ENCODE measurements at regions of chr17 and their contacts with region 1.

Region 1: DNA sequence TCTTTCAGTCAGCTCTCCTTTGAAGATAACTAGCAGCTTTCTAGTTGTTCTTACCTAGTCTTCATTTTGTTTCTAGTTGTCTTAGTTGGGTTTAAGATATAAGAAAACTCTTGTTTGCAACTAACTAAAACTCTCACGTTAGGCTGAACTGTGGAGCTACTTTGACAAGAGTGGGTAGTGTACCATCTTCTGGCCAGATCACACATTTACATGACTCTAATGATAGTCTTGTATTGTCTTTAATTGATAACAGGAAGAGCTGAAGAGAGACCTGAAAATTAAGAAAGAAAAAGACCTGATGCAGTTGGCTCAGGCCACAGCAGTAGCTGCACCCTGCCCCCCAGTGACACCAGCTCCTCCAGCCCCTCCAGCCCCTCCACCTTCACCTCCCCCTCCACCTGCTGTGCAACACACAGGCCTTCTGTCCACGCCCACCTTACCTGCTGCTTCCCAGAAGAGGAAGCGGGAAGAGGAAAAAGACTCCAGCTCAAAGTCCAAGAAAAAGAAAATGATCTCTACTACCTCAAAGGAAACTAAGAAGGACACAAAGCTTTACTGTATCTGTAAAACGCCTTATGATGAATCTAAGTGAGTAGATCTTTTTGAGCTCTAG is 36.9 kb downstream of the C17orf58 start:
- DNase-seq: no peak
- H3K4me3 ChIP-seq: no peak overlapping the region
- H3K27ac ChIP-seq: no peak overlapping the region; the same call in 1 of the 2 replicates
- H3K4me1 ChIP-seq: peaks cover 0 to 4% (median 0%) of the 10 kb centered on the region in 4 experiments; a peak in 1 of 7 replicates
- H3K27me3 ChIP-seq: no peaks in the 10 kb centered on the region
- CTCF ChIP-seq: no peak
- EP300 ChIP-seq: no peak
- POLR2A ChIP-seq: 0 out of 3 replicates have a peak, but pooled peaks of 1 of the 2 experiments have one; percentile 2
- RAD21 ChIP-seq: no peak

Region 2: GRCh38 chr17:67942810-67943209 is 16.6 kb before region 1 on chr17:
- CTCF ChIA-PET with region 1: interaction called, 11 read pairs
- POLR2A ChIA-PET with region 1: interaction called, 5 read pairs
- DNase-seq: no peak
- H3K4me3 ChIP-seq: no peak overlapping the region
- H3K27ac ChIP-seq: no peak overlapping the region
- H3K4me1 ChIP-seq: no peaks in the 10 kb centered on the region
- H3K27me3 ChIP-seq: no peaks in the 10 kb centered on the region
- CTCF ChIP-seq: peak in 2 of 3 experiments; percentile 34 to 67; a peak in 2 of 4 replicates
- EP300 ChIP-seq: no peak
- POLR2A ChIP-seq: no peak
- RAD21 ChIP-seq: peak; percentile 14 to 42; a peak in 2 of 4 replicates

Region 3: DNA sequence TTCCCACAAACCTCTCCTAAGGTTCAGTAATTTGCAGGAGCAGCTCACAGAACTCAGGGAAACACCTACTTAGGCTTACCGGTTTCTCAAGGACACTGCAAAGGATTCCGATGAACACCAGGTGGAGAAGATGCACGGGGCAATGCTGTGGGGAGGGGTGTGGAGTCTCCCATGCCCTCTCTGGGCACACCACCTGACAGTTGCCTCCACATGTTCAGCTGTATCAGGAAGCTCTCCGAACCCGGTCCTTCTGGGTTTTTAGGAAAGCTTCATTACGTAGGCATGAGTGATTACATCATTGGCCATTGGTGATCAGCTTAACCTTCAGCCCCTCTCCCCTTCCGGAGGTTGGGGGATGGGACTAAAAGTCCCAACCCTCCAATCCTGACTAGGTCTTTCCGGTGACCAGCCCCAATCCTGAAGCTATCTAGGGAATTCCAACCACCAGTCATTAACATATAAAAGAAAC is 15.2 kb after region 1 on chr17:
- CTCF ChIA-PET with region 1: interaction called, 12 read pairs
- POLR2A ChIA-PET with region 1: interaction called, 13 read pairs
- DNase-seq: peak; percentile 72 to 87
- H3K4me3 ChIP-seq: peak overlapping the region; percentile 70 to 87 (median 78)
- H3K27ac ChIP-seq: peak overlapping the region; percentile 95
- H3K4me1 ChIP-seq: peaks cover 0 to 7% (median 2%) of the 10 kb centered on the region in 4 experiments; a peak in 4 of 7 replicates
- H3K27me3 ChIP-seq: no peaks in the 10 kb centered on the region
- CTCF ChIP-seq: peak in 1 of 3 experiments; percentile 6; a peak in 1 of 4 replicates
- EP300 ChIP-seq: peak in 1 of 2 experiments; percentile 27; a peak in 1 of 3 replicates
- POLR2A ChIP-seq: peak; percentile 45 to 89
- RAD21 ChIP-seq: no peak

Region 4: GRCh38 chr17:68011199-68011665 is 51.8 kb after region 1 on chr17:
- CTCF ChIA-PET with region 1: interaction called, 10 read pairs
- POLR2A ChIA-PET with region 1: interaction called, 4 read pairs
- DNase-seq: peak in 1 of 2 experiments; percentile 92
- H3K4me3 ChIP-seq: peak overlapping the region in 1 of 4 experiments; percentile 33; a peak in 1 of 8 replicates
- H3K27ac ChIP-seq: no peak overlapping the region
- H3K4me1 ChIP-seq: no peaks in the 10 kb centered on the region
- H3K27me3 ChIP-seq: no peaks in the 10 kb centered on the region
- CTCF ChIP-seq: peak; percentile 67 to 85 (median 83)
- EP300 ChIP-seq: no peak
- POLR2A ChIP-seq: no peak
- RAD21 ChIP-seq: peak; percentile 51 to 56

Measured in H1 (cell line).